Ascending aorta (tissue), 2 donors: ENCODE measurements at regions of chr10 and their contacts with region 1.

Region 1: DNA sequence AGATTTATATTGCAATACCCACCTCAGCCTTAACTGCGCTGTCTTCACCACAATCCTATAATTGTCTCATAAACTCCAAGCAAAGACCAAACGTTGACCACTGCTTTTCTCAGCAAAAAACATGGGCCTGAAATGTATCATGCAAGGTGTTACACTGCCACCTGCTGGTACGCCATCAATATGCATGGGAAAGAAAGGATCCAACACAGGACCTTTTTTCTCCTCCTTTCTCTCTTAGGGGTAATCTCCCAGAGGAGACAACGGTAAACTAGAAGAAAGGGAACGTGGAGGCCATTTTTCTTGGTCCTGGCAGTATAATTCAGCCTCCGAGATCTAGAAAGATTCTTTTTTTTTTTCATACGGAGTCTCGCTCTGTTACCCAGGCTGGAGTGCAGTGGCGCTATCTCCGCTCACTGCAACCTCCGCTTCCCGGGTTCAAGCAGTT is 79.1 kb upstream of the MPP7 start:
- DNase-seq: peak; percentile 22 to 95
- H3K4me3 ChIP-seq: peak overlapping the region in 1 of 2 donors; percentile 35
- H3K27ac ChIP-seq: no peak overlapping the region
- H3K4me1 ChIP-seq: peaks cover 0 to 2% of the 10 kb centered on the region in 2 donors
- H3K27me3 ChIP-seq: no peaks in the 10 kb centered on the region
- CTCF ChIP-seq: peak; percentile 93 to 98 (median 93)

Region 2: GRCh38 chr10:27558612-27559020 is 823.3 kb before region 1 on chr10:
- intact Hi-C with region 1: loop called (anchors 2 kb)
- DNase-seq: peak in 1 of 2 donors; percentile 67
- H3K4me3 ChIP-seq: no peak overlapping the region
- H3K27ac ChIP-seq: no peak overlapping the region
- H3K4me1 ChIP-seq: no peaks in the 10 kb centered on the region
- H3K27me3 ChIP-seq: no peaks in the 10 kb centered on the region
- CTCF ChIP-seq: peak; percentile 75 to 86 (median 77)

Region 3: GRCh38 chr10:28054228-28054837 is 327.6 kb before region 1 on chr10:
- intact Hi-C with region 1: loop called (anchors 10 kb)
- DNase-seq: no peak
- H3K4me3 ChIP-seq: no peak overlapping the region
- H3K27ac ChIP-seq: peak overlapping the region; percentile 71 to 72
- H3K4me1 ChIP-seq: peaks cover 0 to 12% of the 10 kb centered on the region in 2 donors
- H3K27me3 ChIP-seq: no peaks in the 10 kb centered on the region
- CTCF ChIP-seq: no peak

Region 4: DNA sequence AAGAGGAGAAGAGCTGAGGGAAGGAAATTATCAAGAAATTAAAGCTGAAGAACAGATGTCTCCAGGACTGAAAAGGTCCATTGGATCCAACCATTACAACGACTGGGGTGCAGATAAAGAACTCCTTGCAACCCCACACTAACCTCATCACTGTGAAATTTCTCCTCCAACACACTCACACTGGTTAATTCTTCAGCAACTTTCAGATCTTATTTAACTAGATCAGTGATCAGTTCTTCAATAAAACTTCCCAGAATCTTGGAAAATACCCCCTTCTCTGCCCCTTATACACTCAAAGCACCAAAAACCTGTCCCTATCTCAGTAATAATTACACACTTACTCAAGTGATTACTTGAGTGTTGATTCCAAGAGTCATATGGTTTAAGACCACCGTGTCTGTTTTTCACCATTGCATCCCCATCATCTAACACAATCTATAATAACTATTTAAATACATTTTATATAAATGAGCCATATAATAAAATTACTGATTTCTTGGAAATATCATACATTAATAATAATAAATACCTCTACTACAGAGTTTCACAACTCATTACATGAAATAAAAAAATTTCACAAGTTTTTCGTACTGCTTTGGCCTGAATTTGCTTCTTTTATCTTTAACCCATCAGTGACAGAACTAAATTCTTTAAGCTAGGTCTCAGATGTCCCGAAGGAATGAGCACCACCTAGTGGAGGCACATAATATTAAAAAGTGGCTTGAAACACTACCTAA is 202.8 kb before region 1 on chr10:
- intact Hi-C with region 1: loop called (anchors 10 kb)
- DNase-seq: no peak
- H3K4me3 ChIP-seq: peak overlapping the region in 1 of 2 donors; percentile 53
- H3K27ac ChIP-seq: peak overlapping the region in 1 of 2 donors; percentile 60
- H3K4me1 ChIP-seq: peaks cover 5 to 12% of the 10 kb centered on the region in 2 donors
- H3K27me3 ChIP-seq: no peaks in the 10 kb centered on the region
- CTCF ChIP-seq: peak; percentile 48 to 72 (median 61)

Region 5: GRCh38 chr10:28250782-28251181 is 131.1 kb before region 1 on chr10:
- intact Hi-C with region 1: loop called (anchors 1 kb)
- DNase-seq: no peak
- H3K4me3 ChIP-seq: no peak overlapping the region
- H3K27ac ChIP-seq: peak overlapping the region; percentile 74 to 77
- H3K4me1 ChIP-seq: peaks cover 0 to 32% of the 10 kb centered on the region in 2 donors
- H3K27me3 ChIP-seq: no peaks in the 10 kb centered on the region
- CTCF ChIP-seq: peak; percentile 58 to 72 (median 62)

Region 6: DNA sequence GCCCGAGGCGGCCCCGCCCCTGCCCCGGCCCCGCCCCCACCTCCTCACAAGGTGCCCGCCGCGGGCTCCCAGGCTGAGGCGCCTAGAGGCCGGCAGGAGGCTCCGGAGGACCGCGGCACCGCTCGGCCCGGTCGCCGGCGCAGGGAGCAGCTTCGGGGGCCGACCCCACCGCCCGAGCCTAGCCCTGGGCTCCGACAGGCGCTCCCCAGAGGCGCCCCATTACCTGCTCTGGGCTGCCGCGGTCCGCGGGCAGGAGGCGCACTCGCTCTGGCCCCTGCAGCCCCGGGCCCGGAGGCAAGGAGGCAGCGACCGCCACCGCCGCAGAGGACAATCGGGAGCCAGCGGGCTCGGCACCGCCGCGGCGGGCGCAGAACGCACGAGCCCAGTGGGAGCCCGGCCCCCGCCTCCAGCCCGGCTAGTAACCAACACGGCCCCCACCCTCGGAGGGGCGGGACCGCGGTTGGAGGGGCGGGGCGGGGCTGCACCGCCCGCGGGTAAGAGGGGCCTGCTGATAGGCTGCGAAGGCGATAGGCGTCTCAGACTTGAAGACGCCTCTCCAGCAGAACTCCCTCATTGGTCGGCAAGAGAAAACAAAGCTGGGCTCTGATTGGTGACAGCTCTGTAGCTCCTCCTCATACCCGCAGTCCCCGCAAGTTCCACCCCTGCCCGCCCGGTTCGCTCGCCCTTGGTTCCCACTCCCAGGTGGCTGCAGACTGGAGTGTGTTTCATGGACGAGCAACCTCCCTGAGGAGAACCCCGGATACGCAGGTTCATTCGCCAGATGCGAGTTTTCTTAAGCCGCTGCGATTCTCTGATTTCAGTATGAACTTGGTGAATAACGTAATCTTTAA is 79.1 kb before region 1 on chr10 and contains the start of gene MPP7:
- intact Hi-C with region 1: loop called (anchors 1 kb)
- DNase-seq: peak; percentile 93 to 99
- H3K4me3 ChIP-seq: peak within 1 kb of the TSS; percentile 81 to 90
- H3K27ac ChIP-seq: peak within 1 kb of the TSS; percentile 94 to 96
- H3K4me1 ChIP-seq: peaks cover 0 to 8% of the 10 kb centered on the region in 2 donors
- H3K27me3 ChIP-seq: no peaks in the 10 kb centered on the region
- CTCF ChIP-seq: peak in 2 of 3 experiments; percentile 46 to 55
- total RNA-seq, gene MPP7: 43.9 TPM

Region 7: GRCh38 chr10:28326516-28327490 is 55.1 kb before region 1 on chr10:
- intact Hi-C with region 1: loop called (anchors 2 kb)
- DNase-seq: peak; percentile 46 to 89
- H3K4me3 ChIP-seq: peak overlapping the region in 1 of 2 donors; percentile 25
- H3K27ac ChIP-seq: peak overlapping the region; percentile 73 to 86
- H3K4me1 ChIP-seq: peaks cover 0 to 17% of the 10 kb centered on the region in 2 donors
- H3K27me3 ChIP-seq: no peaks in the 10 kb centered on the region
- CTCF ChIP-seq: no peak

Region 8: GRCh38 chr10:28545967-28546644 is 164.2 kb after region 1 on chr10:
- intact Hi-C with region 1: no loop called
- DNase-seq: no peak
- H3K4me3 ChIP-seq: no peak overlapping the region
- H3K27ac ChIP-seq: no peak overlapping the region
- H3K4me1 ChIP-seq: peaks cover 0 to 5% of the 10 kb centered on the region in 2 donors
- H3K27me3 ChIP-seq: no peaks in the 10 kb centered on the region
- CTCF ChIP-seq: no peak

Region 9: GRCh38 chr10:28604567-28605536 is 222.9 kb after region 1 on chr10:
- intact Hi-C with region 1: no loop called
- DNase-seq: no peak
- H3K4me3 ChIP-seq: no peak overlapping the region
- H3K27ac ChIP-seq: no peak overlapping the region
- H3K4me1 ChIP-seq: peaks cover 0 to 8% of the 10 kb centered on the region in 2 donors
- H3K27me3 ChIP-seq: no peaks in the 10 kb centered on the region
- CTCF ChIP-seq: no peak